ENCODE measurements at regions of chr3 and their contacts with region 1.

Region 1: GRCh38 chr3:133573054-133573628 is 345 bp upstream of the CDV3 start:
- DNase-seq: peak; percentile 100
- H3K4me3 ChIP-seq: peak overlapping the region; percentile 73 to 88
- H3K27ac ChIP-seq: peak overlapping the region; percentile 94 to 97
- H3K4me1 ChIP-seq: peaks cover 26 to 51% of the 10 kb centered on the region in 2 donors
- H3K27me3 ChIP-seq: no peaks in the 10 kb centered on the region
- CTCF ChIP-seq: no peak

Region 2: DNA sequence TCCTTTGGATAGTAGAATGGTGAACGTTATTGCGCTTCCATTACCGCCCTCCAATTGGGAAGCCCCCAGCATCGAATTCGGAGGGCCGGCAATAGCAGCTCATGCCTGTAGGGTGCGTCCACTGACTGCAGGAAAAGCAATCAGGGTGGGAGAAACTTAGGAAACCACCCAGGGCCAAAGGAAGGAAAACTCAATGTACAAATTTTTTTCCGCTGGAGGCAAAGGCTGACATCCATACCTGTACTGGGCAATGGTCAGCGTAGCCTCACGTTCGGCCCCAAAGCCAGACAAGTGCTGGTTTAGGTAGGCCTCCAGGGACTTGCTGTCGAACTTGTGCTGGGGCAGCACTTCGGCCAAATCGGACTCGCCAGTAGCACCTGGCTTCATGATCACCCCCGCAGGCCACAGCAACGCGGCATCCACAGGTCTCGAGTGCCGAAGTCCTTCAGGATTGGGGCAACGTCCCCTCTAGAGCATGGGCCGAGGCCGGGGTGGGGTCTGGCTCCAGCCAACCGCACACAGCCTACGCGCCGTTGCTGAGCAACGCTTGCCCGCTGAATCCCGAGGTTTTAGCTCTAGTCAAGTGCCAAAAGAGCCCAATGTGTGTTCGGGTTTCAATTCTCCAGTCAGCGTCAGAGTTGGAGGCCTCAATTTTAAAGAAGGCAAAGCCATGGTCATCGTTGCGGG is 913.6 kb before region 1 on chr3 and contains the start of gene ACAD11:
- intact Hi-C with region 1: loop called (anchors 1 kb)
- DNase-seq: peak; percentile 56 to 85
- H3K4me3 ChIP-seq: peak within 1 kb of the TSS; percentile 80 to 81
- H3K27ac ChIP-seq: peak within 1 kb of the TSS; percentile 95 to 98
- H3K4me1 ChIP-seq: peaks cover 0 to 19% of the 10 kb centered on the region in 2 donors
- H3K27me3 ChIP-seq: no peaks in the 10 kb centered on the region
- CTCF ChIP-seq: peak in 2 of 3 experiments; percentile 66 to 67
- total RNA-seq, gene ACAD11: 10.7 TPM

Region 3: GRCh38 chr3:132788301-132788671 is 784.9 kb before region 1 on chr3:
- intact Hi-C with region 1: loop called (anchors 10 kb)
- DNase-seq: peak in 1 of 2 donors; percentile 69
- H3K4me3 ChIP-seq: no peak overlapping the region
- H3K27ac ChIP-seq: peak overlapping the region; percentile 27 to 80
- H3K4me1 ChIP-seq: peaks cover 5 to 17% of the 10 kb centered on the region in 2 donors
- H3K27me3 ChIP-seq: no peaks in the 10 kb centered on the region
- CTCF ChIP-seq: no peak

Region 4: GRCh38 chr3:133547432-133548041 is 25.6 kb before region 1 on chr3:
- intact Hi-C with region 1: loop called (anchors 2 kb)
- DNase-seq: peak in 1 of 2 donors; percentile 66
- H3K4me3 ChIP-seq: no peak overlapping the region
- H3K27ac ChIP-seq: peak overlapping the region; percentile 59 to 61
- H3K4me1 ChIP-seq: peaks cover 0 to 5% of the 10 kb centered on the region in 2 donors
- H3K27me3 ChIP-seq: no peaks in the 10 kb centered on the region
- CTCF ChIP-seq: no peak

Region 5: GRCh38 chr3:133649486-133650068 is 76.4 kb after region 1 on chr3:
- intact Hi-C with region 1: no loop called
- DNase-seq: no peak
- H3K4me3 ChIP-seq: no peak overlapping the region
- H3K27ac ChIP-seq: no peak overlapping the region
- H3K4me1 ChIP-seq: no peaks in the 10 kb centered on the region
- H3K27me3 ChIP-seq: no peaks in the 10 kb centered on the region
- CTCF ChIP-seq: no peak

Region 6: DNA sequence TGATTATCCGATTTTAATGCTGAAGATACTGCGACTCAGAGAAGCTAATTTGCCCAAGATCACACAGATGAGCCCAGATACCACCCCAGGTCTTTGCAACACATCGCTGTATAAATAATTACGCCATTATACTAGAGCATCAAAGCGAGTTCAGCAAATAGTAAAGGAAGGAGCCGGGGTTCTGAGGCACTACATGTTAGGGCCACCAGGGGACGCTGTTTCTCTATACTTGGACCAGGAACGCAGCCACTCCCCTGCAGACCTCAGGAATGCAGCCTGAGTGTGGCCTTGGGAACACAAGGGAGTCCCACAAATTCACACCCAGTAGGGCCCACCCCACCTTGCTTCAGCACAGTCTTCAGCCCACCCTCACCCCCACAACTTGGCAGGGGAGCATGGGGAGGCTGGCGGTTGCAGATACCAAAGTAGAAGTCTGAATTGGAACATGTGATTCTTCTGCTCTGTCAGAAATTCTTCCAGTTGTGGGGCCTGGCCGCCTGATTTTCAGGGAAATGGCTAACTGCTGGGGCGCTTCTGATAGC is 735.3 kb after region 1 on chr3:
- intact Hi-C with region 1: loop called (anchors 10 kb)
- DNase-seq: peak in 1 of 2 donors; percentile 91
- H3K4me3 ChIP-seq: peak overlapping the region in 1 of 2 donors; percentile 27
- H3K27ac ChIP-seq: peak overlapping the region; percentile 94 to 97
- H3K4me1 ChIP-seq: peaks cover 4 to 26% of the 10 kb centered on the region in 2 donors
- H3K27me3 ChIP-seq: no peaks in the 10 kb centered on the region
- CTCF ChIP-seq: peak; percentile 99 to 100 (median 99)